ENCODE measurements at regions of chr13 and their contacts with region 1.

Region 1: GRCh38 chr13:99436686-99437416 is 64.4 kb upstream of the TM9SF2 start:
- DNase-seq: peak; percentile 83
- ATAC-seq: peak; percentile 90
- H3K4me3 ChIP-seq: no peak overlapping the region
- H3K27ac ChIP-seq: no peak overlapping the region
- H3K4me1 ChIP-seq: peaks cover 3% of the 10 kb centered on the region
- H3K27me3 ChIP-seq: peaks cover 20% of the 10 kb centered on the region
- CTCF ChIP-seq: peak; percentile 100
- POLR2A ChIP-seq: no peak
- RAD21 ChIP-seq: peak; percentile 88

Region 2: GRCh38 chr13:98504371-98504963 is 932.4 kb before region 1 on chr13:
- CTCF ChIA-PET with region 1: no interaction called
- POLR2A ChIA-PET with region 1: no interaction called
- dilution Hi-C with region 1: no loop called
- in situ Hi-C with region 1: no loop called
- intact Hi-C with region 1: no loop called
- DNase-seq: no peak
- ATAC-seq: no peak
- H3K4me3 ChIP-seq: no peak overlapping the region
- H3K27ac ChIP-seq: peak overlapping the region; percentile 36; the same call in 1 of the 2 replicates
- H3K4me1 ChIP-seq: peaks cover 36% of the 10 kb centered on the region
- H3K27me3 ChIP-seq: no peaks in the 10 kb centered on the region
- CTCF ChIP-seq: no peak
- POLR2A ChIP-seq: no peak
- RAD21 ChIP-seq: no peak

Region 3: DNA sequence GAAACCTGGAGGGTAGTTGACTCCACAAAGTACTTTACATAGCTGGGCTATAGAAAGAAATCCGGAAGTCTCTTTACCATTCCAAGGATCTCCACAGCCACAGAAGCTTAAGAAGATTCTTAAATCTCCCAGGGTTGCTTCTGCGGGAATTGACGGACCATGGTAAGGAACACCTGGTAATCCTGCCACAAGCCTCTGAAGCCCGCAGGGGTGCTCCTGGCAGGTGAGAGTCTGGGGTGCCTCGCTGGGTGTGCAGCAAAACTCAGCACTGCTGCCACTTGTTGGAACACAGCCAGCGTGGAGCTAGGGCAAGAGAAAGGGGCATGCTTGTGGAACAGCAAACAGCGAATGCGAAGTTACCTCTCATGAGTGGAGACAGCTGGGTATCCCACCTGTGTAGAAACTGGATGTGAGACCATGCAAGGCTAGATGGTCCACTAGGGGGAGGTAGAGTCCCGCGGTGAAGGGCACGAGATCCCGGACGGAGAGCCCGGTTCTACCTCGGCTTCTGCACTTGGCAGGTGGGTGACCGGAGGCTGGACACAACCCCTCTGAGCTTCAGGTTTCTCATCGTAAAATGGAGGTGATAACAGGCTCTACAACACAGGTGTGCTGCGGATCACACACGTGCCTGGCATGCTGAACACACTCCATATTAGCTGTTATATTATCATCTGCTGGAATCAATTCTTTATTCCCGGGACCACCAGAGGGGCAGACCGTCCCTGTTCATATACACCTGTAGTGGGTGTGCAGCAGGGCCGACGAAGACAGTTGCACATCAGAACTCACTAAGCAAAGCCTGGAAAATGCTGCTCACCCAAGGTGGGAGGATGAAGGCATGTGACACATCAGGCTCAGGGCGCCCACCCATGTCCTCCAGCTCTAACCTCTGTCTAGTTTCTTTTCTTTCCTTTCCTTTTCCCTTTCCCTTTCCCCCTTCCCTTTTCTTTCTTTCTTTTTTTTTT is 260.3 kb before region 1 on chr13:
- CTCF ChIA-PET with region 1: interaction called, 9 read pairs
- POLR2A ChIA-PET with region 1: no interaction called
- dilution Hi-C with region 1: no loop called
- in situ Hi-C with region 1: loop called (anchors 5 kb)
- intact Hi-C with region 1: loop called (anchors 1 kb)
- DNase-seq: peak; percentile 43
- ATAC-seq: peak; percentile 97
- H3K4me3 ChIP-seq: no peak overlapping the region
- H3K27ac ChIP-seq: no peak overlapping the region
- H3K4me1 ChIP-seq: no peaks in the 10 kb centered on the region
- H3K27me3 ChIP-seq: peaks cover 35% of the 10 kb centered on the region
- CTCF ChIP-seq: peak; percentile 84
- POLR2A ChIP-seq: no peak
- RAD21 ChIP-seq: peak; percentile 92

Region 4: GRCh38 chr13:99473515-99473914 is 36.7 kb after region 1 on chr13:
- CTCF ChIA-PET with region 1: interaction called, 10 read pairs
- POLR2A ChIA-PET with region 1: no interaction called
- dilution Hi-C with region 1: no loop called
- in situ Hi-C with region 1: no loop called
- intact Hi-C with region 1: no loop called
- DNase-seq: no peak
- ATAC-seq: peak; percentile 67
- H3K4me3 ChIP-seq: no peak overlapping the region
- H3K27ac ChIP-seq: no peak overlapping the region
- H3K4me1 ChIP-seq: peaks cover 3% of the 10 kb centered on the region
- H3K27me3 ChIP-seq: peaks cover 8% of the 10 kb centered on the region
- CTCF ChIP-seq: no peak
- POLR2A ChIP-seq: no peak
- RAD21 ChIP-seq: no peak

Measured in IMR-90 (cell line).